Caco-2 (cell line): ENCODE measurements at regions of chr1 and their contacts with region 1.

Region 1: GRCh38 chr1:214660862-214661261 is 57.9 kb downstream of the CENPF start:
- DNase-seq: peak; percentile 43 to 66
- H3K4me3 ChIP-seq: no peak overlapping the region
- H3K4me3 Mint-ChIP-seq: no peak overlapping the region
- H3K27ac Mint-ChIP-seq: no peak overlapping the region
- H3K4me1 ChIP-seq: no peaks in the 10 kb centered on the region
- H3K4me1 Mint-ChIP-seq: peaks cover 7% of the 10 kb centered on the region
- H3K27me3 ChIP-seq: no peaks in the 10 kb centered on the region
- H3K27me3 Mint-ChIP-seq: no peaks in the 10 kb centered on the region
- CTCF ChIP-seq: peak; percentile 56 to 75

Region 2: DNA sequence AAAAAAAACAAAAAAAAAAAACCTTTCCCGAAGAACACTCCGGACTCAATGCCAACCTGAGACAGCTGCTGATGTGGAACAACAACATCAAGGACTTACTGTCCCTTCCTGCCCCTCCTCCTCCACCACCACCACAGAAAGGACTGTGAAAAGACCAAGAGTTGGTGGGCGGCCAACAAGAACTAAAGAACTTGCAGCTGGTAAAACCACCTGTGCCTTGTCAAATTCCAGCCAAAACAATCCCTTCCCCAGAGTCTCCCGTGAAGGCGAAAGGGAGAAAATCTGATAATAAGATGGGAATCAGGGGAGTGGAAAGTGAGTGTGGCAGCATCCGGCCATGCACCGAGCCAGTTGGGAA is 584.2 kb before region 1 on chr1:
- CTCF ChIA-PET with region 1: no interaction called
- POLR2A ChIA-PET with region 1: no interaction called
- intact Hi-C with region 1: no loop called
- DNase-seq: no peak
- H3K4me3 ChIP-seq: no peak overlapping the region
- H3K4me3 Mint-ChIP-seq: no peak overlapping the region
- H3K27ac Mint-ChIP-seq: no peak overlapping the region
- H3K4me1 ChIP-seq: peaks cover 9% of the 10 kb centered on the region; the same call in 1 of the 2 replicates
- H3K4me1 Mint-ChIP-seq: peaks cover 7% of the 10 kb centered on the region
- H3K27me3 ChIP-seq: no peaks in the 10 kb centered on the region
- H3K27me3 Mint-ChIP-seq: no peaks in the 10 kb centered on the region
- CTCF ChIP-seq: no peak

Region 3: GRCh38 chr1:214808845-214809460 is 148.1 kb after region 1 on chr1:
- CTCF ChIA-PET with region 1: no interaction called
- POLR2A ChIA-PET with region 1: no interaction called
- intact Hi-C with region 1: loop called (anchors 5 kb)
- DNase-seq: no peak
- H3K4me3 ChIP-seq: no peak overlapping the region
- H3K4me3 Mint-ChIP-seq: no peak overlapping the region
- H3K27ac Mint-ChIP-seq: no peak overlapping the region
- H3K4me1 ChIP-seq: no peaks in the 10 kb centered on the region
- H3K4me1 Mint-ChIP-seq: no peaks in the 10 kb centered on the region
- H3K27me3 ChIP-seq: no peaks in the 10 kb centered on the region
- H3K27me3 Mint-ChIP-seq: no peaks in the 10 kb centered on the region
- CTCF ChIP-seq: no peak

Region 4: GRCh38 chr1:214833178-214833756 is 172.4 kb after region 1 on chr1:
- CTCF ChIA-PET with region 1: no interaction called
- POLR2A ChIA-PET with region 1: no interaction called
- intact Hi-C with region 1: no loop called
- DNase-seq: peak; percentile 42 to 54
- H3K4me3 ChIP-seq: no peak overlapping the region
- H3K4me3 Mint-ChIP-seq: no peak overlapping the region
- H3K27ac Mint-ChIP-seq: no peak overlapping the region
- H3K4me1 ChIP-seq: peaks cover 6% of the 10 kb centered on the region; the same call in 1 of the 2 replicates
- H3K4me1 Mint-ChIP-seq: peaks cover 17% of the 10 kb centered on the region
- H3K27me3 ChIP-seq: no peaks in the 10 kb centered on the region
- H3K27me3 Mint-ChIP-seq: no peaks in the 10 kb centered on the region
- CTCF ChIP-seq: no peak

Region 5: DNA sequence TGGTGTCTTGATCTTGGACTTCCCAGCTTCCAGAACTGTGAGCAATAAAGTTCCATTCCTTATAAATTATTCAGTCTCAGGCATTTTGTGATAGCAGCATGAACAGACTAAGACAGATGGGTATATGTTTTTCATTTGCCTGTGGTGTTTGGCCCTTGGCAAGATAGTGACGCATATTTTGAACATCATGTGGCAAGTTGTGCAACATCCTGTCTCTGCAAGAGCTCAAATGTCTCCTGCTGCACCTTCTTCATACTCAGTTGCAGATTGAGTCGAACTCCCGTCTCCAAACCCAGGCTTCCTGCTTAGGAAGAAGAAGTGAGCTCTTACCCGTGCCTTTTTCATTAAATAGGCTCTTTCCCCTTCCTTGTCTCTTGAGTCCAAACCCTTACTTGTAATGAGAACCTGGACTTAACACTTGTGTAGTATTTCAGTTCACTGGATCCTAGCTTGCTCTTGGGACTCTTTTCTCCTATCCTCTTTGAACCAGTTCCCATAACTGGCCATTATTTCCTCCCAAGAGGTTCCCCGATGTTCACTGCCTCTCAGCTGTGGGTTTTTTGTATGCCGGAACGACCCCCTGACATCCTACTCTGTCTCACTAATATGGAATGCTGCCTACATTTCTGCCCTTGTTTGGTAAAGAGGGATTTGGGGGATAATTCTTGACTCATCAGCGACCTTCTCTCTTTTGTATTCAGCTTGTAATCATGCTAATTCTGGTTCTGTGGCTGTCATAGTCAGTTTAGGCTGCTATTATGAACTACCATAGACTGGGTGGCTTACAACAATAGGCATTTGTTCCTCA is 296.7 kb after region 1 on chr1:
- CTCF ChIA-PET with region 1: no interaction called
- POLR2A ChIA-PET with region 1: no interaction called
- intact Hi-C with region 1: loop called (anchors 1 kb)
- DNase-seq: no peak
- H3K4me3 ChIP-seq: no peak overlapping the region
- H3K4me3 Mint-ChIP-seq: no peak overlapping the region
- H3K27ac Mint-ChIP-seq: no peak overlapping the region
- H3K4me1 ChIP-seq: no peaks in the 10 kb centered on the region
- H3K4me1 Mint-ChIP-seq: peaks cover 4% of the 10 kb centered on the region
- H3K27me3 ChIP-seq: no peaks in the 10 kb centered on the region
- H3K27me3 Mint-ChIP-seq: no peaks in the 10 kb centered on the region
- CTCF ChIP-seq: no peak

Region 6: GRCh38 chr1:215104283-215104682 is 443.4 kb after region 1 on chr1:
- CTCF ChIA-PET with region 1: no interaction called
- POLR2A ChIA-PET with region 1: no interaction called
- intact Hi-C with region 1: no loop called
- DNase-seq: no peak
- H3K4me3 ChIP-seq: no peak overlapping the region
- H3K4me3 Mint-ChIP-seq: no peak overlapping the region
- H3K27ac Mint-ChIP-seq: no peak overlapping the region
- H3K4me1 ChIP-seq: no peaks in the 10 kb centered on the region
- H3K4me1 Mint-ChIP-seq: no peaks in the 10 kb centered on the region
- H3K27me3 ChIP-seq: no peaks in the 10 kb centered on the region
- H3K27me3 Mint-ChIP-seq: peaks cover 7% of the 10 kb centered on the region
- CTCF ChIP-seq: no peak

Region 7: DNA sequence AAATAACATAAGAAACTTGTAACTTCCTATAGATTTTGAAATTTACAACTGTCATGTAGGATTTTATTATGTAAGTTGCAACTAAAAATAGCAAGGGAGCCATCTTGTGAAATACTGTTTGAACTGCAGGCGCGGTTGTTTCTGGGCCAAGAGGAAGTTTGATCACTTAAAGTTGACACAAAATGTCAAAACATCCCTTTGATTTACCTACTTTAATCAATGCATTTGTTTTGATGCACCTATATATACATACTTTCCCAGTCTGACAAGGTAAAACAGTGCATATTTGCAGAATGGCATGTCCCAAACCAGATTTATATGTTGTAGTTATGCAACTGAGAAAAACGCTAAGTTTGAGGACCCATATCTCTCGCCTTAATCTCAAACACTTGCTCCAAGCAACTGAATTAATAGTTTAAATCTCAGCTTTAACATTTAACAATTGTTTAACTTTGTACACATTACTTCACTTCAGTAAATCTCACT is 485.5 kb after region 1 on chr1:
- CTCF ChIA-PET with region 1: interaction called, 5 read pairs
- POLR2A ChIA-PET with region 1: no interaction called
- intact Hi-C with region 1: loop called (anchors 1 kb)
- DNase-seq: peak in 1 of 2 experiments; percentile 29
- H3K4me3 ChIP-seq: no peak overlapping the region
- H3K4me3 Mint-ChIP-seq: no peak overlapping the region
- H3K27ac Mint-ChIP-seq: no peak overlapping the region
- H3K4me1 ChIP-seq: no peaks in the 10 kb centered on the region
- H3K4me1 Mint-ChIP-seq: no peaks in the 10 kb centered on the region
- H3K27me3 ChIP-seq: no peaks in the 10 kb centered on the region
- H3K27me3 Mint-ChIP-seq: no peaks in the 10 kb centered on the region
- CTCF ChIP-seq: peak; percentile 59 to 69